Gastrocnemius medialis (tissue), 4 donors: ENCODE measurements at regions of chr3 and their contacts with region 1.

Region 1: GRCh38 chr3:127688416-127689265 is 15.9 kb downstream of the ABTB1 start:
- DNase-seq: peak; percentile 60 to 87
- ATAC-seq: peak; percentile 83 to 87
- H3K4me3 ChIP-seq: no peak overlapping the region
- H3K27ac ChIP-seq: peak overlapping the region; percentile 81 to 89 (median 86)
- H3K4me1 ChIP-seq: peaks cover 22 to 23% of the 10 kb centered on the region in 2 donors
- H3K27me3 ChIP-seq: no peaks in the 10 kb centered on the region
- CTCF ChIP-seq: no peak
- POLR2A ChIP-seq: no peak

Region 2: DNA sequence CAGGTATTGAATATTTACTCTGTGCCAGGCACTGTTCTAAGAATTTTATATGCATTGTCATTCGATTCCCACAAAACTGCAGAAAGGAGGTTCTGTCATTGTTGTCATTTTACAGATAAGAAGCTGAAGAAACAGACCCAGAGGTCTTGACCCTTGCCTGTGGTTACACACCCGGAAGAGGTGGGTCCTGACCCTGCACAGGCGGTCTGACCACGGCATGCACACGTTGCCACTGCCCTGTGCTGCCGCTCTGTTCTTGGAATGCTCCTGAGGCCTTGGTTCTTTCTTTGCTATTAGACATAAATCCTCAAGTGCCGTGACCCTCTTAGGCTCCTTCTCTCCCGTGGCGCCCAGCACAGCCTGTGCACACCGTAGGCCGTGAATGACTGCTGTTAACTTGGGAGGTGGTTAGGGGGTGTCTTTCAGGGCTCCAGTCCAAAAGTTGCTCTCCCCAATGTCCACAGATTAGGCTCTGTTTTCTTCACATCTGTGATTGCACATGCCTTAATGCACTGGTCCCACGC is 779.8 kb before region 1 on chr3:
- in situ Hi-C with region 1: no loop called
- intact Hi-C with region 1: no loop called
- DNase-seq: no peak
- ATAC-seq: no peak
- H3K4me3 ChIP-seq: no peak overlapping the region
- H3K27ac ChIP-seq: no peak overlapping the region
- H3K4me1 ChIP-seq: peaks cover 0 to 4% of the 10 kb centered on the region in 2 donors
- H3K27me3 ChIP-seq: no peaks in the 10 kb centered on the region
- CTCF ChIP-seq: no peak
- POLR2A ChIP-seq: no peak

Region 3: GRCh38 chr3:127448161-127448561 is 240.5 kb before region 1 on chr3:
- in situ Hi-C with region 1: no loop called
- intact Hi-C with region 1: no loop called
- DNase-seq: no peak
- ATAC-seq: no peak
- H3K4me3 ChIP-seq: no peak overlapping the region
- H3K27ac ChIP-seq: no peak overlapping the region
- H3K4me1 ChIP-seq: no peaks in the 10 kb centered on the region
- H3K27me3 ChIP-seq: peaks cover 0 to 4% (median 4%) of the 10 kb centered on the region in 3 donors
- CTCF ChIP-seq: no peak
- POLR2A ChIP-seq: no peak

Region 4: DNA sequence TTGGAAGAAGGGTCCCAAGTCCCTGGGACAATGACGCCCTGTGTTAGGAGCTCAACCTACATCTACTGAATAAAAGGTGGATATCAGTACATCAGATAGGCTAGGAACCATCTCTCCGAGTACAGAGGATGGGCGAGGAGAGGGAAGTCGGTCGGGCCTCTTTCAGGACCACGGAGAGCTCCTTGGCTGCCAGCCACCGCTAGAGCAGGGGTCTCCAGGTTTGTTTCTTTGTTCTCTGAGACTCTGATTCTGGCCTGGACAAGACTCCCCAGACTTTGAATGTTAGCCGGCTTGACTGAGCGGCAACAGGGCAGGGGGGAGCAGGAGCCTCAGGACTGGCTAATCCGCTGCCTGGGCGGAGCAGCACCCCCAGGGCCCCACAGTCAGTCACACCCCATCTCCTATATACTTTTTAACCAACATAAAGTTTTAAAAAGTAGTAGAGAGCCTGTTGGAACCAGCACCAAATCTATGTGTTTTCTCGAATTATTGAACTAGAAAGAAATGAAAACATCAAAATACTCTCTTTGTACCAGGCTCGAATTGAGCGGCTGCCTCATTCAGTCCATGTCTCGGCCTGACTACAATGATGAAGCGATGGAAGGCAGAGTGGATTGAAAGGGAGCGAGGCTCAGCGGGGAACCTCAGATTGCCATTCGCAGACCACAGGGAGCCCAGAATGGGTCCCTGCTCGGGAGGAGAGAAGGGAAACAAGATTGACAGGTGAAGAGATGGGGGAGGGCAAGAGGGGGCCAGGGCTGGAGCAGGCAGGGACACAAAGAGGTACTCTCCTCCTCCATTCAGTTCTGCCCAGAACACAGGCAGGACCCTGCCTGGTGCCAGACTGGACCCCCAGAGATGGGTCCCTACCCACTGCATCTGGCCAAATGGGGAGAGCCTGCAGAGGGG is 229.7 kb before region 1 on chr3:
- in situ Hi-C with region 1: no loop called
- intact Hi-C with region 1: no loop called
- DNase-seq: no peak
- ATAC-seq: no peak
- H3K4me3 ChIP-seq: no peak overlapping the region
- H3K27ac ChIP-seq: no peak overlapping the region
- H3K4me1 ChIP-seq: peaks cover 4 to 6% of the 10 kb centered on the region in 2 donors
- H3K27me3 ChIP-seq: peaks cover 32 to 42% (median 40%) of the 10 kb centered on the region in 3 donors
- CTCF ChIP-seq: no peak
- POLR2A ChIP-seq: no peak

Region 5: DNA sequence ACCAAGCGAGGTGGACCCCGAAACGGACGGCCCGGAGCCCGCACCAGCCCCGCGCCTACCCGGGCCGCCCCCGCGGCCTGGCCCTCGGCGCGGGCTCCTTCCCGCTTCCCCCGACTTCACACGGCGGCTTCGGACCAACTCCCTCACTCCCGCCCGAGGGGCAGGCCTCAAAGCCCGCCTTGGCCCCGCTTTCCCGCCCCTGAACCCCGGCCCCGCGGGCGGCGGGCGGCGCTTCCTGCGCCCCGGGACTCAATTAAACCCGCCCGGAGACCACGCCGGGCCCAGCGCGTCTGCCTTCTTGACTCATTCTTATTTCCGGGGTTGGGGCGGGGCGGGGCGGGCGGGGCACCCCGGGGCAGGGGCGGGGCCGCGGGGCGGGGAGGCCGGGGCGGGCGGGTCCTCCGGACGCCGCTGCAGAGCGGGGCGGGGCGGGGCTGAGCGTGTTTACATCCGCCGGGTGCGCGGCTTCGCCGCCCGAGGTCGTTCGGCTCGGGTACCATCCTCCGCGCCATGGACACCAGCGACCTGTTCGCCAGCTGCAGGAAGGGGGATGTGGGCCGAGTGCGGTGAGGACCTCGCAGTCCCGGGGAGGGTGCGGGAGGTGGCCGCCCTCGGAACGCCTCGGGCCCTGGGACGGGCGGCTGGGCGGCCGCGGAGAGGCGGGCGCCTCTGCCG is 16.0 kb before region 1 on chr3 and contains the start of gene ABTB1:
- in situ Hi-C with region 1: no loop called
- intact Hi-C with region 1: loop called (anchors 1 kb)
- DNase-seq: peak; percentile 75 to 81
- ATAC-seq: peak; percentile 84 to 87
- H3K4me3 ChIP-seq: peak within 1 kb of the TSS; percentile 63 to 91 (median 80)
- H3K27ac ChIP-seq: peak within 1 kb of the TSS; percentile 85 to 98 (median 90)
- H3K4me1 ChIP-seq: peaks cover 11 to 19% of the 10 kb centered on the region in 2 donors
- H3K27me3 ChIP-seq: no peaks in the 10 kb centered on the region
- CTCF ChIP-seq: no peak
- POLR2A ChIP-seq: peak; percentile 91 to 93
- total RNA-seq, gene ABTB1: 22.9 to 37.5 (median 30.1) TPM